ENCODE measurements at regions of chr17 and their contacts with region 1.

Region 1: GRCh38 chr17:44708401-44709181 is at the start of gene DBF4B:
- DNase-seq: peak; percentile 76
- ATAC-seq: peak; percentile 86
- H3K4me3 Mint-ChIP-seq: no peak within 1 kb of the TSS
- H3K27ac Mint-ChIP-seq: peak within 1 kb of the TSS; percentile 54
- H3K4me1 Mint-ChIP-seq: peaks cover 5% of the 10 kb centered on the region
- H3K27me3 Mint-ChIP-seq: peaks cover 6% of the 10 kb centered on the region
- total RNA-seq, gene DBF4B: 27.7 to 31.8 TPM

Region 2: DNA sequence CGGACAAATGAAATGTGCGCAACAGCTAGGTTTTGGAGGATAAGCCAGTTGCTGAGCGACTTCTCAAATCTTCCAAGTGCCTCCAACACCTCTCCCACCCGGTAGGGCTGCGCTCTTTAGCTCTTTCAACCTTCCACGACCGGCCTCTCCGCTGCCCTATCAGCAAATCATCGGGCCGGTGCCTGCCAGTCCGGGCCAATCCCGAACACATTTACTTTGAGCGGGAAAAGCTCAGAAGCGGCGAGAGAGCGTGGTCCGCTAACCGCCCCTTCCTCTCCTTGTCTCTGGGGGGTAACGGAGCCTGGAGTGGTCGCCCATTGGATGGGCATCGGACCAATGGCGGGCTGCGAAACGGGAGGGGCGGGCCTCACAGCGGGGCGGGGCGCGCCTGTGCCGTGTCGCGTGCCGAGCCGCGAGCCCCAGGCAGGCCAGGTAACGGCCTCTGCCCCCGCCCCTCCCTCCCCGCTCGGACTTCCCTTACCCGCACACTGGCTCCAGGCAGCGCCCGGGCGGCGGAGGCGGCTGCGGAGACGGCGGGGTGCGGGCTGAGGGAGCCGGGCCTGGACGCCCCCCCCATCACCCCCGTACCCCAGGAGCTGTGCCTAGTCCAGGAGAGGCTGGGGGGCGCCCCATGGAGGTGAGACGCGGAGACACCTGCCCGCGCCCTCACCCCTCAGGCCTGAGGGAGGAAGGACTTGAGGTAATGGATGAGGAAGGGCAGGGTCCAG is 52.4 kb before region 1 on chr17 and contains the start of gene MEIOC:
- POLR2A ChIA-PET with region 1: no interaction called
- DNase-seq: peak; percentile 42
- ATAC-seq: peak; percentile 68
- H3K4me3 Mint-ChIP-seq: peak within 1 kb of the TSS; percentile 54
- H3K27ac Mint-ChIP-seq: no peak within 1 kb of the TSS
- H3K4me1 Mint-ChIP-seq: peaks cover 3% of the 10 kb centered on the region
- H3K27me3 Mint-ChIP-seq: peaks cover 46% of the 10 kb centered on the region
- total RNA-seq, gene MEIOC: not detected

Region 3: DNA sequence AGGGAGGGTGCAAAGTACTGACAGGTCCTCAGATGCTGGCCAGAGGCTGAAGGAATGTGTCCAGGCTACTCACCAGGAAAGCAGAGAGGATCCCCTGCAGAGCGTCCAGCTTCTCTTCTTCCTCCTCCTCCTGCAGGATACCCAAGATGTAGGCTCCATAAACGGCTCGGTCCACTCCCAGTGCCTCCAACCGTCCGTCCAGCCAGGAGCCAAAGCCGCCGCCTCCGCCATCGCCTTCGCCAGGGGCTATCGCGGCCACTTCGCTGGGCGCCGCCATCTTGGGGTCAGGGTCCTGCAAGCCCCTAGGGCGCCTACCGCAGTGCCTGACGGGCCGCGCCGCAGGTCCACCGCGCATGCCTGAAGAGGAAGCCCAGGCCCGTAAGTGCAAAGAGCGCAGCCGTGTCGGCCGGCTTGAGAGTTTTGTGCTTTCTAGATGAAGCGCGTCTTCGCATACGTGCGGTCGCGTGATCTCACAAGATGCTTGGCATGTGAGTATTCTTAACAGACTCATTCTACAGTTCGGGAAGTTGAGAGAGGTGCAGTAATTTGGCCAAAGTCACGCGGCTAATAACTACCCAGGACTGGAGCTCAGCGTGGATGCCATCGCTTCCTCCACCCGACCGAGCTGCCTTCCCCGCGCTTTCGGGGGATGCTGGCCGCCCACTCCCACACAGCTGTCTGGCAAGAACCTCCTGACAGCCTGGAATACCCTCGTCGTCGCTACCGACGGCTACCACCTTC is 18.9 kb before region 1 on chr17 and contains the start of gene CCDC43:
- POLR2A ChIA-PET with region 1: interaction called, 20 read pairs
- DNase-seq: peak; percentile 91
- ATAC-seq: peak; percentile 99
- H3K4me3 Mint-ChIP-seq: peak within 1 kb of the TSS; percentile 98
- H3K27ac Mint-ChIP-seq: peak within 1 kb of the TSS; percentile 96
- H3K4me1 Mint-ChIP-seq: peaks cover 11% of the 10 kb centered on the region
- H3K27me3 Mint-ChIP-seq: peaks cover 2% of the 10 kb centered on the region
- total RNA-seq, gene CCDC43: 21.7 to 23.9 TPM

Region 4: GRCh38 chr17:44775136-44775837 is 66.7 kb after region 1 on chr17:
- POLR2A ChIA-PET with region 1: no interaction called
- DNase-seq: peak; percentile 94
- ATAC-seq: peak; percentile 96
- H3K4me3 Mint-ChIP-seq: peak overlapping the region; percentile 86
- H3K27ac Mint-ChIP-seq: peak overlapping the region; percentile 45
- H3K4me1 Mint-ChIP-seq: peaks cover 7% of the 10 kb centered on the region
- H3K27me3 Mint-ChIP-seq: peaks cover 21% of the 10 kb centered on the region